A673 (cell line): ENCODE measurements at regions of chr2 and their contacts with region 1.

Region 1: DNA sequence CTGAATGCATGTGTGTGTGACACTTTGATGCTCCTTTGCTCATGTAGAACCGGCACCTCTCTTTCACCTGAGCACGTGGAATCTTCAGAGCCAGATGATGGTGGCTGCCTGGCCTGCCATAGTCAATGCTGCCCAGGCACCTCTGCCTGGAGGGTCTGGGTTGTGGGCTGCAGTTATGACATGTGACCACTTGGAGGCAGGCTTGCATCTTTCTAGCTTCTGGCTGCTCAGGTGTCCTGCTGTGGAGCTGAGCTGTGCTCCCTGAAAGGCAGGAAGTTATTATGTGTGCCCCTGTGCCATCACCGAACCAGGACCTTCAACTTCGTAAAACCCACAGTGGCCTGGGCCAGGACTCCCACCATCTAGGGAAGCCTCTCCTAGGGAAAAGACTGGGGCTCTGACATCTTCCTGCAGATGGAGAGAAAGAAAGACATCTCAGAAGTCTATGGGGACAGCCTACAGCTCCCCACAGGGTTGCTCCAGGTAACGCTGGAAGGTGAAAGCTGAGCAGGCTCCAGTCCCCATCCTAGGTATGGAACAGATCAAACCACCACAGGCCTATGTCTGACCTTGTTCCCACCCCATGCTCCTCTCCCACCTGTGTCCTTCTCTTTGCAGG is 30.2 kb downstream of the PSD4 start:
- DNase-seq: peak; percentile 85
- H3K4me3 ChIP-seq: no peak overlapping the region
- H3K27ac ChIP-seq: no peak overlapping the region
- H3K4me1 ChIP-seq: peaks cover 16% of the 10 kb centered on the region
- H3K27me3 ChIP-seq: no peaks in the 10 kb centered on the region
- CTCF ChIP-seq: peak; percentile 87

Region 2: GRCh38 chr2:113138428-113139322 is 65.3 kb before region 1 on chr2:
- CTCF ChIA-PET with region 1: interaction called, 11 read pairs
- POLR2A ChIA-PET with region 1: no interaction called
- intact Hi-C with region 1: loop called (anchors 5 kb)
- DNase-seq: peak; percentile 74
- H3K4me3 ChIP-seq: no peak overlapping the region
- H3K27ac ChIP-seq: no peak overlapping the region
- H3K4me1 ChIP-seq: no peaks in the 10 kb centered on the region
- H3K27me3 ChIP-seq: no peaks in the 10 kb centered on the region
- CTCF ChIP-seq: peak; percentile 78

Region 3: GRCh38 chr2:113240150-113240862 is 36.3 kb after region 1 on chr2:
- CTCF ChIA-PET with region 1: interaction called, 18 read pairs
- POLR2A ChIA-PET with region 1: no interaction called
- intact Hi-C with region 1: no loop called
- DNase-seq: peak; percentile 89
- H3K4me3 ChIP-seq: no peak overlapping the region
- H3K27ac ChIP-seq: peak overlapping the region; percentile 64
- H3K4me1 ChIP-seq: peaks cover 35% of the 10 kb centered on the region
- H3K27me3 ChIP-seq: no peaks in the 10 kb centered on the region
- CTCF ChIP-seq: no peak

Region 4: DNA sequence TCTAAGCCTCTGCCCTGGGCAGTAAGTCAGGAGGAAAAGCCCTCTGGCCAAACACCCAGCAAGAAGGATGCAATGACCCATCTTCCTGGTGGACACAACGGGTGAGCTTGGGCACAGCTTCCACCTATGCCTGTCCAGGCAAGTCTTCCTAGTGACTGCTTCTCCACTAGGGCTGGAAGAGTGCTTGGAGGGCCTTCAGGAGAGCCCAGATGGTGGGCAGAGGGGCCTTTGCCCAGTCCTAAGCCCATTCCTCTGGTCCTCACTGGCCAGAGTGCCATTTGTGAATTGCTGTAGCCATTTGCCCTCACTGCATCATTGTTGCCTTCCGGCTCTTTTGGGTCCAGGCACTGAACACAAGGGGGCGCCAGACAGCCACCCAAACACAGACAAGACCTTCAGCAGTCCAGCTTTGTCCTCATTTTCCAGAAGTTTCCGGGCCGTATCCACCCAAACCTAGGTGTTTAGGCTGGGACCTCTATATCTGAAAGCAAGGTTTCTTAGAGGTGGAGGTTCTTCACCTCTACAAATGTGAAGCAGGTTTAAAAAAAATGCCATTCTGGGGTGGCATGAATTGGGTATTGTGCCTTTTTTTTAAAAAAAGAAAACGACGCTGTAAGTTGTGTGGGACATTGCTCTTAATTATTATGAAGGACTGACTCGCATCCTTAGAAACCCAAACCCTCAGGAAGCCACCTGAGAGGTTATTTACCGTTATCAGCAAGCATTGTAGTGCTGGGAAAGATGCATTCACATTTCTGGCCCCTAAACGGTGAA is 45.2 kb after region 1 on chr2:
- CTCF ChIA-PET with region 1: interaction called, 11 read pairs
- POLR2A ChIA-PET with region 1: no interaction called
- intact Hi-C with region 1: loop called (anchors 2 kb)
- DNase-seq: peak; percentile 80
- H3K4me3 ChIP-seq: no peak overlapping the region
- H3K27ac ChIP-seq: no peak overlapping the region
- H3K4me1 ChIP-seq: no peaks in the 10 kb centered on the region
- H3K27me3 ChIP-seq: no peaks in the 10 kb centered on the region
- CTCF ChIP-seq: peak; percentile 95

Region 5: GRCh38 chr2:113282747-113283533 is 78.9 kb after region 1 on chr2:
- CTCF ChIA-PET with region 1: interaction called, 3 read pairs
- POLR2A ChIA-PET with region 1: no interaction called
- intact Hi-C with region 1: loop called (anchors 10 kb)
- DNase-seq: peak; percentile 31
- H3K4me3 ChIP-seq: no peak overlapping the region
- H3K27ac ChIP-seq: no peak overlapping the region
- H3K4me1 ChIP-seq: peaks cover 18% of the 10 kb centered on the region
- H3K27me3 ChIP-seq: no peaks in the 10 kb centered on the region
- CTCF ChIP-seq: 0 out of 2 replicates have a peak, but pooled peaks have one; percentile 11

Region 6: DNA sequence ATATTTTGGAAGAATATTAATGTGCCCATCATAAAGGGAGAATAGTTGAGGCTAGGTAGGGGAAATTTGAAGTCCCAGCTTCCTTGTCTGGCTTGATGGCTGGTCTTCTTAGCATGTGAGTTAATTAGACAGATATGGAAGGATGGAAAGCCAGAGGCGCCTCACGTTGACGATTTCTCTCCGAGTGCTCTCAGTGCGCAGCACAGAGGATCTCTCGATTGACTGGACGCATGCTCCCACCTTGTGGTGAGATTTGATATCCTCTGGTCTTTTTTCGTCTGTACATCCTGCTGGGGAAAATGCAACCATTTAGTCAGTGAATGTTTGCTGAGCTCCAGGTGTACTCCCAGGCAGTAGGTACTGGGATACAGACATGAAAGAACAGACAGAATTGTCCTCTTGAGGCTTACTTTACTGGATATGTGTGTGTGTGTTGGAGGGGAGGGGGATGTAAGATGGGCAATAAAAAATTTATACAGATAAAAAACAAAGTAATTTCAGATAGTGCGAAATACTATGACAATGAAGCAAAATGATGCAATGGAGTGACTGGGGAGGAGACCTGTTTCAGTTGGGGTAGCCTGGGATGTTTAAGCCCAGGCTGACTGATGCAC is 166.6 kb after region 1 on chr2:
- CTCF ChIA-PET with region 1: no interaction called
- POLR2A ChIA-PET with region 1: no interaction called
- intact Hi-C with region 1: loop called (anchors 1 kb)
- DNase-seq: peak; percentile 78
- H3K4me3 ChIP-seq: no peak overlapping the region
- H3K27ac ChIP-seq: no peak overlapping the region
- H3K4me1 ChIP-seq: no peaks in the 10 kb centered on the region
- H3K27me3 ChIP-seq: no peaks in the 10 kb centered on the region
- CTCF ChIP-seq: peak; percentile 64

Region 7: GRCh38 chr2:113390124-113390849 is 186.3 kb after region 1 on chr2:
- CTCF ChIA-PET with region 1: interaction called, 12 read pairs
- POLR2A ChIA-PET with region 1: no interaction called
- intact Hi-C with region 1: loop called (anchors 1 kb)
- DNase-seq: peak; percentile 87
- H3K4me3 ChIP-seq: no peak overlapping the region
- H3K27ac ChIP-seq: no peak overlapping the region
- H3K4me1 ChIP-seq: no peaks in the 10 kb centered on the region
- H3K27me3 ChIP-seq: no peaks in the 10 kb centered on the region
- CTCF ChIP-seq: peak; percentile 95